Naive thymus-derived CD8-positive, alpha-beta T cell (primary cell): ENCODE measurements at regions of chr1 and their contacts with region 1.

Region 1: DNA sequence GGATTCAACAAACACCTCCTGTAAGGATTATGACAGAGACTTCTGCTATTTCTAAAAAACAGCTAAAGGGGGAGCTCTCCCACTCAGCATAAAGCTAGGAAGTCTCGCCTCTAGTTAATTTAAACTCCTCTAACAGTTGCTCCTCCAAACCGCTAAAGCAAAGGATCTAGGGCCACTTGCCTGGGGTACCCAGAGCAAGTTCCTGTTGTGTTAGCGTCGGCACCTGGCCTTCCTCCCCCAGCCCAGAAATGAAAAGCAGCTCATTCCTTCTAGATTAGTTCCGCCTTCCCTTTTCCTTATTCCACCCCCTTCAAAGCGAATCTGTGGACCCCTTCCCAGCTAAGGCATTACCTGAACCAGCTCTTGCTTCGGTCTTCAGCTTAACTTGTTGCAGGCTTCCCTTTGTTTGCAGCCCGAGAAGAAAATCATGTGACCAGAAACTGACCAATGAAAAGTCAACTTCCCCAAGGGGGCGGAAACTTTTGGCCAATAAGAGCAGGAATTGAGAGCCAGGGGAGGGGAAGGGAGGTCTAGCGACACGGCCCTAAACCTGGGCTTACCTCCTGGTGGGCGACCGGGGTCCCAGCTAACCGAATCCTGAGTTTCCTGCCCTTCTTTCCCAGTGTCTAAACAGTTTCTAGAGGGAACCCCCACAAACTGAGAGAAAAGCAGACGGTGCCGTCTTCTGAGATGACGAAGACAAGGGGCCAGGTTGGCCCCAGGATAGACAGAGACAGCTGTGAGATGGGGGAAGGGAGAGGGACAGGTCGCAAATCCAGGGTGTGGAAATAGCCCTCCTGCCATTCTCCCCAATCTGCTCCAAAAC is at the start of gene PBXIP1:
- DNase-seq: peak; percentile 49 to 96 (median 88)
- ATAC-seq: peak; percentile 41 to 50
- H3K4me3 Mint-ChIP-seq: peak within 1 kb of the TSS; percentile 95 to 100 (median 98)
- H3K27ac Mint-ChIP-seq: peak within 1 kb of the TSS; percentile 97 to 100 (median 100)
- H3K4me1 Mint-ChIP-seq: peaks cover 39 to 86% (median 67%) of the 10 kb centered on the region in 4 donors
- H3K27me3 Mint-ChIP-seq: no peaks in the 10 kb centered on the region
- polyA plus RNA-seq, gene PBXIP1: 182 to 239 (median 183) TPM

Region 2: GRCh38 chr1:154936555-154937084 is 19.3 kb before region 1 on chr1 and contains the start of gene PMVK:
- POLR2A ChIA-PET with region 1: interaction called, 87 read pairs
- DNase-seq: peak in 9 of 10 donors; percentile 84 to 98 (median 95)
- ATAC-seq: peak; percentile 76 to 83
- H3K4me3 Mint-ChIP-seq: peak within 1 kb of the TSS; percentile 86 to 100 (median 98)
- H3K27ac Mint-ChIP-seq: peak within 1 kb of the TSS; percentile 98 to 100 (median 99)
- H3K4me1 Mint-ChIP-seq: peaks cover 20 to 64% (median 53%) of the 10 kb centered on the region in 4 donors
- H3K27me3 Mint-ChIP-seq: no peaks in the 10 kb centered on the region
- polyA plus RNA-seq, gene PMVK: 41.0 to 45.7 (median 45.1) TPM

Region 3: DNA sequence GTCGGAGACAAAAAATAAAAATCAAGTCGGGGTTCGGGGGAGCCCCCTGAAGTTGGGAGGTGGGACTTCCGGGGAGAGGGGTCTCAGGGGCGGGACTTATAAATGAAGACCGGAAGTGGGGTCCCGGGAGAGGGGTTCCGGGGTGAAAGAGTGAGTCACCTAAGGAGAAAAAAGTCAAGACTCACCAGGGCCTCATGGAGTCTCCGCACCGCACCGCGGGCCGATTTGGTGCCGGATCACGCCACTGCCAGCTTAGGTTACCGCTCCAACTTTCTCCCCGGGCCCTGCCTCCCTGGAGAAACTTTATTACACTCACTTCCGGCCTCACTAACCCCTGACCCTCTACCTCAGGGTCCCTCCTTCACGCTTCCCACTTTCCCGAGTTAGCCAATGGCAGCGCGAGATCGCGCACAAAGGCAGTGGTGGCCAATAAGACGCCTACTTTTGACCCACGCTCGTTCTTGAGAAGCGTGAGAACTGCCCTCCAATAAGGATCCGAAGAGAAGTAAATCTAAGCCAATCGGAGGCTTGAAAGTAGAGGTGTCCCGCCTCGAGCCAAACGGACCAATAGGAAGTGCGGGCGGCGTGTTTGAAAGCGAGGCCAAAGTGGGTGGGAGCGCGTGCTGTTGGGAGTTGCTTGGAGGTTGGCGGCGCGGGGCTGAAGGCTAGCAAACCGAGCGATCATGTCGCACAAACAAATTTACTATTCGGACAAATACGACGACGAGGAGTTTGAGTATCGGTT is 18.3 kb after region 1 on chr1 and contains the start of gene CKS1B:
- POLR2A ChIA-PET with region 1: interaction called, 85 read pairs
- DNase-seq: peak; percentile 86 to 99 (median 98)
- ATAC-seq: peak; percentile 88 to 90
- H3K4me3 Mint-ChIP-seq: no peak within 1 kb of the TSS
- H3K27ac Mint-ChIP-seq: no peak within 1 kb of the TSS
- H3K4me1 Mint-ChIP-seq: peaks cover 16 to 33% (median 30%) of the 10 kb centered on the region in 4 donors
- H3K27me3 Mint-ChIP-seq: no peaks in the 10 kb centered on the region
- polyA plus RNA-seq, gene CKS1B: 58.0 to 66.6 (median 63.0) TPM

Region 4: GRCh38 chr1:154982897-154983648 is 27.1 kb after region 1 on chr1 and contains the start of gene FLAD1:
- POLR2A ChIA-PET with region 1: interaction called, 22 read pairs
- DNase-seq: peak; percentile 84 to 98 (median 94)
- ATAC-seq: peak; percentile 99 to 100
- H3K4me3 Mint-ChIP-seq: no peak within 1 kb of the TSS
- H3K27ac Mint-ChIP-seq: peak within 1 kb of the TSS in 1 of 10 donors; percentile 63
- H3K4me1 Mint-ChIP-seq: peaks cover 0 to 21% (median 2%) of the 10 kb centered on the region in 4 donors
- H3K27me3 Mint-ChIP-seq: no peaks in the 10 kb centered on the region
- polyA plus RNA-seq, gene FLAD1: 30.9 to 41.8 (median 31.9) TPM

Region 5: GRCh38 chr1:155001675-155002463 is 45.9 kb after region 1 on chr1:
- POLR2A ChIA-PET with region 1: interaction called, 29 read pairs
- DNase-seq: peak; percentile 89 to 98 (median 92)
- ATAC-seq: peak; percentile 71 to 80
- H3K4me3 Mint-ChIP-seq: peak overlapping the region; percentile 82 to 94 (median 90)
- H3K27ac Mint-ChIP-seq: peak overlapping the region; percentile 66 to 92 (median 87)
- H3K4me1 Mint-ChIP-seq: peaks cover 34 to 80% (median 57%) of the 10 kb centered on the region in 4 donors
- H3K27me3 Mint-ChIP-seq: peaks cover 0 to 6% (median 0%) of the 10 kb centered on the region in 5 donors

Region 6: GRCh38 chr1:155012026-155012546 is 56.2 kb after region 1 on chr1:
- POLR2A ChIA-PET with region 1: interaction called, 29 read pairs
- DNase-seq: no peak
- ATAC-seq: no peak
- H3K4me3 Mint-ChIP-seq: peak overlapping the region in 3 of 10 donors; percentile 15 to 34 (median 16)
- H3K27ac Mint-ChIP-seq: peak overlapping the region in 3 of 10 donors; percentile 48 to 83 (median 75)
- H3K4me1 Mint-ChIP-seq: peaks cover 33 to 81% (median 79%) of the 10 kb centered on the region in 4 donors
- H3K27me3 Mint-ChIP-seq: no peaks in the 10 kb centered on the region

Region 7: DNA sequence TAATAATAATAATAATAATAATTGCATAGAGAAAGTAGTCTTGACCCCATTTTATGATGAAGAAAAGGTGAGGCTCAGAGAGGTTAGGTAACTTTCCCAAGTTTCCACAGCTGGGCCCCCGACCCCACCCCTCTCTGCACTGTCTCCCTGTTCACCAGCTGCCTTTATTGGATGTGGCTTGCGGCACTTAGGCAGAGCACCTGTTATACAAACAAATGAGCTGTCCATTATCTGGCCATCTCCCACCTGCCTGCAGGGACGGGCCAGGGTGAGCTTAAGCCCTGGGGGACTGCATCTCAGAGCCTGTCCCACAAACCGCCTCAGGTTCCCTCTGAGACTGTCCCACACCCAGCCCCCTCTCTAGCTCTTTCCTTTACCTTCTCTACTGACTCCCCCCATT is 161.7 kb after region 1 on chr1:
- POLR2A ChIA-PET with region 1: no interaction called
- DNase-seq: no peak
- ATAC-seq: no peak
- H3K4me3 Mint-ChIP-seq: no peak overlapping the region
- H3K27ac Mint-ChIP-seq: no peak overlapping the region
- H3K4me1 Mint-ChIP-seq: peaks cover 0 to 2% (median 0%) of the 10 kb centered on the region in 4 donors
- H3K27me3 Mint-ChIP-seq: peaks cover 0 to 3% (median 0%) of the 10 kb centered on the region in 5 donors